Mucosa of descending colon (tissue), 3 donors: ENCODE measurements at regions of chr13 and their contacts with region 1.

Region 1: GRCh38 chr13:39765801-39766463 is 110.5 kb downstream of the COG6 start:
- DNase-seq: peak; percentile 58 to 88 (median 76)
- ATAC-seq: peak; percentile 94
- H3K4me3 ChIP-seq: no peak overlapping the region
- H3K4me1 ChIP-seq: peaks cover 17% of the 10 kb centered on the region
- CTCF ChIP-seq: no peak

Region 2: GRCh38 chr13:39602614-39603366 is 163.1 kb before region 1 on chr13 and contains the start of gene LHFPL6:
- intact Hi-C with region 1: no loop called
- DNase-seq: peak; percentile 70 to 74 (median 72)
- ATAC-seq: peak; percentile 95
- H3K4me3 ChIP-seq: peak within 1 kb of the TSS; percentile 31
- H3K4me1 ChIP-seq: peaks cover 5% of the 10 kb centered on the region
- CTCF ChIP-seq: no peak
- total RNA-seq, gene LHFPL6: 4.9 to 26.1 (median 8.3) TPM

Region 3: GRCh38 chr13:39942552-39943273 is 176.8 kb after region 1 on chr13:
- intact Hi-C with region 1: loop called in 1 of 2 experiments (anchors 5 kb)
- DNase-seq: peak in 2 of 3 donors; percentile 72 to 77
- ATAC-seq: peak; percentile 96
- H3K4me3 ChIP-seq: no peak overlapping the region
- H3K4me1 ChIP-seq: no peaks in the 10 kb centered on the region
- CTCF ChIP-seq: peak; percentile 83